ENCODE measurements at regions of chr3 and their contacts with region 1.

Region 1: GRCh38 chr3:14261229-14261628 is 82.6 kb downstream of the LSM3 start:
- DNase-seq: peak; percentile 32 to 78 (median 62)
- ATAC-seq: peak; percentile 77
- H3K4me3 ChIP-seq: no peak overlapping the region
- H3K4me3 Mint-ChIP-seq: no peak overlapping the region
- H3K27ac ChIP-seq: no peak overlapping the region
- H3K27ac Mint-ChIP-seq: no peak overlapping the region
- H3K4me1 ChIP-seq: no peaks in the 10 kb centered on the region
- H3K4me1 Mint-ChIP-seq: no peaks in the 10 kb centered on the region
- H3K27me3 ChIP-seq: no peaks in the 10 kb centered on the region
- H3K27me3 Mint-ChIP-seq: peaks cover 0 to 14% (median 0%) of the 10 kb centered on the region in 5 donors

Region 2: DNA sequence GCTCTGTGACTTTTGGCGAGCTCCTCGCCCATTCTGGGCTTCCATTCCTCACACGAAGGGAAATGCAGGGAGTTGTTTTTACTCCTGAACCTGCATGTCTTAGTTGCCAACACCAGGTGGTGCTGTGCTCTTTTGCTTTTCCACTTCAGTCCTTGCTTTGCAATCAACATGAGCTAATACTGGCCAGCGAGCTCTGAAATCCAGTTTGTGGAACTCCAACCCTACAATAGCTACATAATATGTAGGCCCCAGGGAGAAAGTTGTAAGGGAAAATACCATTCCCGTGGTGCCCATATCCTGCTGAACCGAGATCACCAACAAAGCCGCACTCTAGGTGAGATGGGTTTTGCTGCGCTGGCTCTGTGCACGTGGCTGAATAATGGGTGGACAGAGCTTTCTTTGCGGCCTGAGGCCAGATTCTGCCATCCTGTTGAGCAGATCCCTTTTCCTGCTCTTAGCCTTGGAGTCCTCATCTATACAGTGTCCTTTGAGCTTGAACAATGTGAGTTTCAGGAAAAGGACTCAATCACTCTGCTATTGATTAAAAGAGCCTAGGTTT is 57.6 kb before region 1 on chr3:
- CTCF ChIA-PET with region 1: interaction called, 4 read pairs
- POLR2A ChIA-PET with region 1: no interaction called
- intact Hi-C with region 1: loop called in 1 of 2 experiments (anchors 2 kb)
- DNase-seq: peak in 6 of 9 donors; percentile 27 to 41 (median 33)
- ATAC-seq: peak; percentile 80
- H3K4me3 ChIP-seq: no peak overlapping the region
- H3K4me3 Mint-ChIP-seq: no peak overlapping the region
- H3K27ac ChIP-seq: no peak overlapping the region
- H3K27ac Mint-ChIP-seq: peak overlapping the region in 4 of 9 donors; percentile 12 to 83 (median 55)
- H3K4me1 ChIP-seq: peaks cover 0 to 5% of the 10 kb centered on the region in 2 donors
- H3K4me1 Mint-ChIP-seq: peaks cover 0 to 7% (median 5%) of the 10 kb centered on the region in 7 donors
- H3K27me3 ChIP-seq: no peaks in the 10 kb centered on the region
- H3K27me3 Mint-ChIP-seq: no peaks in the 10 kb centered on the region

Region 3: DNA sequence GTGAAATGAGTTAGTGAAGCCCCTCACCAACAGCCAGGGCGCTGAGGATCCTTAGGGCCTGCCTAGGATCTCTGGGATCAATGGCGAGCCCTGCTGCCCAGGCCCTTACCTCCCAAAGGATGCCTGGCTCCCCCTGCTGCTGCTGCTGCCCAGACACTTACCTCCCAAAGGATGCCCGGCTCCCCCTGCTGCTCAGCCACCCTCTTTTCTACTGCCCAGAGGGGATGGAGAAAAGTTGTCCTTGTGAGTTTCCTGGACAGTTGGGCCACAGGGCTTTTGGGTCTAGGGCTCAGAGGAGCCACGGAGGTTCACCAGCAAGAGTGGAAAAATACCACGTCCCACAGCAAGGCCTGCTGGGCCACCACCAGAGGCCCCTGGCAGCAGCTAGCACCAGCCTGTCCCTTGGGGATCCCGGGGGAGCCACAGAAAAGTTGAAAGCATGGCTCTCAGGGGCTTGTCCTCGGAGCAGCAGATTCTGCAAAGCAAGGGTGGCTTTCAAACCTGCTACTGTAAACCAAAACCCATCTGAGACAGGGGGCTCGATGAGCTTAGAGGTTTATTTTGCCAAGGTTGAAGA is 200.6 kb after region 1 on chr3:
- CTCF ChIA-PET with region 1: interaction called, 18 read pairs
- POLR2A ChIA-PET with region 1: no interaction called
- intact Hi-C with region 1: loop called in 1 of 2 experiments (anchors 1 kb)
- DNase-seq: peak in 6 of 9 donors; percentile 22 to 41 (median 32)
- ATAC-seq: peak; percentile 60
- H3K4me3 ChIP-seq: no peak overlapping the region
- H3K4me3 Mint-ChIP-seq: no peak overlapping the region
- H3K27ac ChIP-seq: peak overlapping the region; percentile 5
- H3K27ac Mint-ChIP-seq: peak overlapping the region in 1 of 9 donors; percentile 10
- H3K4me1 ChIP-seq: no peaks in the 10 kb centered on the region
- H3K4me1 Mint-ChIP-seq: peaks cover 0 to 20% (median 5%) of the 10 kb centered on the region in 7 donors
- H3K27me3 ChIP-seq: no peaks in the 10 kb centered on the region
- H3K27me3 Mint-ChIP-seq: no peaks in the 10 kb centered on the region

Region 4: GRCh38 chr3:14467814-14468620 is 206.8 kb after region 1 on chr3:
- CTCF ChIA-PET with region 1: interaction called, 18 read pairs
- POLR2A ChIA-PET with region 1: no interaction called
- intact Hi-C with region 1: loop called (anchors 1 kb)
- DNase-seq: peak; percentile 18 to 63 (median 40)
- ATAC-seq: peak; percentile 77
- H3K4me3 ChIP-seq: no peak overlapping the region
- H3K4me3 Mint-ChIP-seq: no peak overlapping the region
- H3K27ac ChIP-seq: no peak overlapping the region
- H3K27ac Mint-ChIP-seq: peak overlapping the region in 2 of 9 donors; percentile 56 to 75
- H3K4me1 ChIP-seq: no peaks in the 10 kb centered on the region
- H3K4me1 Mint-ChIP-seq: peaks cover 0 to 6% (median 0%) of the 10 kb centered on the region in 7 donors
- H3K27me3 ChIP-seq: no peaks in the 10 kb centered on the region
- H3K27me3 Mint-ChIP-seq: no peaks in the 10 kb centered on the region

Region 5: DNA sequence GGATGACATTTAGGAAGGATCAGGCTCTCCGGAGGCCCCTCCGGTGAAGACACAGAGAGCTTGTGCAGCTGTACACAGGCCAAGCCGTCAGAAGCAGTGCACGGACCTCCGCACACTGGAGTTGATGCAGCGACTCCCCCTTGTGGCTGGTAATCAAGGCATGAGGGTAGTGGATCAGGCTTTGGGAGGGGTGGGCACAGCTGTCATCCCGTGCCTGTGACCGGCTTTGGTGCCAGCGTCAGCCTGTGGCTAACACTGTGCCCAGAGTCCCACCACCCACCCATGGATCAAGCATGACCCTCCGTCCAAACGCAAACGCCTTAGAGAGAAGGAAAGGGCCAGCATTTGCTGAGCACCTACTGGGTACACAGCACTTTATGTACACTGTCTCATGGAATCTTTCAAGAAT is 287.1 kb after region 1 on chr3:
- CTCF ChIA-PET with region 1: no interaction called
- POLR2A ChIA-PET with region 1: no interaction called
- intact Hi-C with region 1: loop called in 1 of 2 experiments (anchors 1 kb)
- DNase-seq: peak in 5 of 9 donors; percentile 21 to 33 (median 22)
- ATAC-seq: peak; percentile 47
- H3K4me3 ChIP-seq: no peak overlapping the region
- H3K4me3 Mint-ChIP-seq: no peak overlapping the region
- H3K27ac ChIP-seq: no peak overlapping the region
- H3K27ac Mint-ChIP-seq: no peak overlapping the region
- H3K4me1 ChIP-seq: no peaks in the 10 kb centered on the region
- H3K4me1 Mint-ChIP-seq: peaks cover 0 to 8% (median 0%) of the 10 kb centered on the region in 7 donors
- H3K27me3 ChIP-seq: no peaks in the 10 kb centered on the region
- H3K27me3 Mint-ChIP-seq: peaks cover 18 to 57% (median 41%) of the 10 kb centered on the region in 5 donors